ENCODE measurements at regions of chr6 and their contacts with region 1.

Region 1: DNA sequence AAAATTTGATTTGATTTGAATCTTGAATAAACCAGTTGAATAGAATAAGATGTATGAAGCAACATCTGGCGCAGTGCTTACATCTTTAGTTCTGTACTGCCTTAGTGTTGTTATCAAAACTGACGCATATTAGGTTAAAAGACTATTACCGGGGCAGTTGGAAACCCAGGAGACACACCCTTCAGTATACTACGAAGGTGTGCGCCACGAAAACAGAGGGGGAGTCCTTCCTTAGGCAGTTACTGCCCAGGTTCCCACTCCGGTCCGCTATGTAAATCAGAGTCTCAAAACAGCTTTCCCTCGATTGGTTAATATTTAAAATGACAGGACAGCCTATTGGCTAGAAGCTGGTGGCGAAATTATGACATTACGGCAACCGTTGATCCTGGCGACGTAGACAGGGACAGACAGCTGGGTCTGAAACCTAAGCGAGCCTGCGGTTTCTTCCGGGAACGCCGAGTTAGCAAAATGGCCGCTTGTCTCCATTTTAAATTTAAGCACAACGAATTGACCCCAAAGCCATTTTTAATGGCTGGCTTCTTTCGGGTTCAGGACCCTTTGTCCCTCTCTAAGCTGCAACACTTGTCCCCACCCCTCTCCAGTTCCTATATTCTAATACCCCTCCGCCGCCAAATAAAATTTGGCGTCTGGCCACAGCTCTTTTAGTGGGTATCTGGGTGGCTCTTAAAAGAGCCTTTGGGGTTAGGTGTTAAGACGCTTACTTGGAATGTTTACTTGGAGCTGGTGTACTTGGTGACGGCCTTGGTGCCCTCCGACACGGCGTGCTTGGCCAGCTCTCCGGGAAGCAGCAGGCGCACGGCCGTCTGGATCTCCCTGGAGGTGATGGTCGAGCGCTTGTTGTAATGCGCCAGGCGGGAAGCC is 35.8 kb downstream of the HFE start:
- DNase-seq: peak; percentile 93
- H3K4me3 ChIP-seq: peak overlapping the region; percentile 78
- H3K27ac ChIP-seq: peak overlapping the region; percentile 93
- H3K27me3 ChIP-seq: no peaks in the 10 kb centered on the region
- CTCF ChIP-seq: 0 out of 2 replicates have a peak, but pooled peaks have one; percentile 2

Region 2: DNA sequence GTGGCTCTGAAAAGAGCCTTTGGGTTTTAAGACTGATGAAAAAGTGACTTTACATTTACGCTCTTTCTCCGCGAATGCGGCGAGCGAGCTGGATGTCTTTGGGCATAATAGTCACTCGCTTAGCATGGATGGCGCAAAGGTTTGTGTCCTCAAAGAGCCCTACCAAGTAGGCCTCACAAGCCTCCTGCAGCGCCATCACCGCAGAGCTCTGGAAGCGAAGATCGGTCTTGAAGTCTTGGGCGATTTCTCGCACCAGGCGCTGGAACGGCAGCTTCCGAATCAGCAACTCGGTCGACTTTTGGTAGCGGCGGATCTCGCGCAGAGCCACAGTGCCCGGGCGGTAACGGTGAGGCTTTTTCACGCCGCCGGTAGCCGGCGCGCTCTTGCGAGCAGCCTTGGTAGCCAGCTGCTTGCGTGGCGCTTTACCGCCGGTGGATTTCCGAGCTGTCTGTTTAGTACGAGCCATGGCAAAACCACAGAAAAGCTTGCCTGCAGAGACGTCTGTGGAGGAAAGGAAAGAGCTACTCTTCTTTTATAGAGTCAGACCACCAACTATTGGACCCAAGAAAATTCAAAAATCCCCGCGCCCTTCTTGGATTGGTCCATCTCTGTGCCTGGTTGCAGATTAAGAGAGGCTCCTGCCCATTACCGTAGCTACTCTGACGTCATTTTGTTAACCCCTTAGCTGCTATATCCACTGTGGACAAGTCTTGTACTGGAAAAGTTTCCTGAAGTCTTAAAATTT is 91.3 kb before region 1 on chr6:
- CTCF ChIA-PET with region 1: interaction called, 6 read pairs
- POLR2A ChIA-PET with region 1: interaction called, 27 read pairs
- DNase-seq: peak; percentile 87
- H3K4me3 ChIP-seq: peak overlapping the region; percentile 68
- H3K27ac ChIP-seq: peak overlapping the region; percentile 92
- H3K27me3 ChIP-seq: no peaks in the 10 kb centered on the region
- CTCF ChIP-seq: peak; percentile 33

Region 3: DNA sequence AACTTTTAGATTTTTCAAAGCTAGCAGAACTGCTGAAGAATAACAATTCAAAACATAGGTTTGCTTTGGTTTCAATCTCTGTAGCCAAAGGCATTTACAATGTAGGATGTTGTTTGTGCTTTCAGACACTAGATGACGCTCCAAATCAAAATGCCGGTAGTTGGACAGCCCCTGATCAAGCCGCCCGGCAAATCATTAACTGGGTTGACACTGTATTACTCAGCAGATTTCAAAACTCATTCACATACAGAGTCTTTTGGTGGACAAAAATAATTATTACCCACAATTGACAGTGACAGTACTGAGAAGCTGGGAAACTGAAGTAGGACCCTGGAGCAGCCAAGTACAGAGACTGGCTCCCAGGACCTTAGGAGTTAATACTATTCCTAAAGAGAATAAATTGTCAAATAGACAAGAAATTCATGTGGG is 57.1 kb before region 1 on chr6:
- CTCF ChIA-PET with region 1: interaction called, 13 read pairs
- POLR2A ChIA-PET with region 1: interaction called, 4 read pairs
- DNase-seq: peak; percentile 62
- H3K4me3 ChIP-seq: no peak overlapping the region
- H3K27ac ChIP-seq: no peak overlapping the region
- H3K27me3 ChIP-seq: no peaks in the 10 kb centered on the region
- CTCF ChIP-seq: peak; percentile 91

Region 4: DNA sequence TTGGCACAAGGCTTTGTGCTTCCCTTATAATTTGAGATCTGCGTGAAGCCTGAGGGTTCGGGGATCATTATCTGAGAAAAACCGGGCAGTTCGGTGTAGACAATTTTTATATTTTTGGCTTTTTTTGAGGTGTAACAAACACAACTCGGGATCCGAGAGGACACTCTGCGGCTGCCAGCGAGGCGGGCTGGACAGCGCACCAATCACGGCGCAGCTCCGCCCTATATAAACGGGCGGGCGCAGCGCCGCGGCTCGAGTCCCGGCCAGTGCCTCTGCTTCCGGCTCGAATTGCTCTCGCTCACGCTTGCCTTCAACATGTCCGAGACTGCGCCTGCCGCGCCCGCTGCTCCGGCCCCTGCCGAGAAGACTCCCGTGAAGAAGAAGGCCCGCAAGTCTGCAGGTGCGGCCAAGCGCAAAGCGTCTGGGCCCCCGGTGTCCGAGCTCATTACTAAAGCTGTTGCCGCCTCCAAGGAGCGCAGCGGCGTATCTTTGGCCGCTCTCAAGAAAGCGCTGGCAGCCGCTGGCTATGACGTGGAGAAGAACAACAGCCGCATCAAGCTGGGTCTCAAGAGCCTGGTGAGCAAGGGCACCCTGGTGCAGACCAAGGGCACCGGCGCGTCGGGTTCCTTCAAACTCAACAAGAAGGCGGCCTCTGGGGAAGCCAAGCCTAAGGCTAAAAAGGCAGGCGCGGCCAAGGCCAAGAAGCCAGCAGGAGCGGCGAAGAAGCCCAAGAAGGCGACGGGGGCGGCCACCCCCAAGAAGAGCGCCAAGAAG is 33.2 kb after region 1 on chr6:
- CTCF ChIA-PET with region 1: interaction called, 3 read pairs
- POLR2A ChIA-PET with region 1: interaction called, 545 read pairs
- DNase-seq: peak; percentile 74
- H3K4me3 ChIP-seq: peak overlapping the region; percentile 83
- H3K27ac ChIP-seq: peak overlapping the region; percentile 97
- H3K27me3 ChIP-seq: no peaks in the 10 kb centered on the region
- CTCF ChIP-seq: peak; percentile 1; the same call in 1 of the 2 replicates

Region 5: DNA sequence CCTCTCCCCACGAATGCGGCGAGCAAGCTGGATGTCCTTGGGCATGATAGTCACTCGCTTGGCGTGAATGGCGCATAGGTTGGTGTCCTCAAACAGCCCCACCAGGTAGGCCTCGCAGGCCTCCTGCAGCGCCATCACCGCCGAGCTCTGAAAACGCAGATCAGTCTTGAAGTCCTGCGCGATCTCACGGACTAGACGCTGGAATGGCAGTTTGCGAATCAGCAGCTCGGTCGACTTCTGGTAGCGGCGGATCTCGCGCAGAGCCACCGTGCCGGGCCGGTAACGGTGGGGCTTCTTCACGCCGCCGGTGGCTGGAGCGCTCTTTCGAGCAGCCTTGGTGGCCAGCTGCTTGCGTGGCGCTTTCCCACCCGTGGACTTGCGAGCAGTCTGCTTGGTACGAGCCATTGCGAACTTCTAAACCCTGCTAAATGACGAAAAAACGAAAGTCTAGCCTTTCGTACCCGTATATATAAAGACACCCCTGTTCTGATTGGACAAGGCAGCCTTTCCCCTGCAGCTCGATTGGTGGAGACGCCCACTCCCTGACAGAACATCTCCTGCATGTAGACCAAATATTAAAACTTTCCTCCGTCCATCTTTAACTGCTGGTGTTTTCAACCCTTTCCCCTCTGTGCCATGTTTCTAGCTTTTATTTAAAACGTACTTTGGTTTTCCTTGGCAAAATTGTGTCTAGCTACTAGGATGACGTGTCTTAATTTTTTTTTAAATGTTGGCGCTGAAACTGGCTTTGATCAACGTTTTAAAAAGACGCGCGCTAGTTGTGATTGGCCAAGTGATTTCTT is 74.0 kb after region 1 on chr6:
- CTCF ChIA-PET with region 1: no interaction called
- POLR2A ChIA-PET with region 1: interaction called, 112 read pairs
- DNase-seq: peak; percentile 86
- H3K4me3 ChIP-seq: peak overlapping the region; percentile 88
- H3K27ac ChIP-seq: peak overlapping the region; percentile 91
- H3K27me3 ChIP-seq: no peaks in the 10 kb centered on the region
- CTCF ChIP-seq: no peak

Region 6: DNA sequence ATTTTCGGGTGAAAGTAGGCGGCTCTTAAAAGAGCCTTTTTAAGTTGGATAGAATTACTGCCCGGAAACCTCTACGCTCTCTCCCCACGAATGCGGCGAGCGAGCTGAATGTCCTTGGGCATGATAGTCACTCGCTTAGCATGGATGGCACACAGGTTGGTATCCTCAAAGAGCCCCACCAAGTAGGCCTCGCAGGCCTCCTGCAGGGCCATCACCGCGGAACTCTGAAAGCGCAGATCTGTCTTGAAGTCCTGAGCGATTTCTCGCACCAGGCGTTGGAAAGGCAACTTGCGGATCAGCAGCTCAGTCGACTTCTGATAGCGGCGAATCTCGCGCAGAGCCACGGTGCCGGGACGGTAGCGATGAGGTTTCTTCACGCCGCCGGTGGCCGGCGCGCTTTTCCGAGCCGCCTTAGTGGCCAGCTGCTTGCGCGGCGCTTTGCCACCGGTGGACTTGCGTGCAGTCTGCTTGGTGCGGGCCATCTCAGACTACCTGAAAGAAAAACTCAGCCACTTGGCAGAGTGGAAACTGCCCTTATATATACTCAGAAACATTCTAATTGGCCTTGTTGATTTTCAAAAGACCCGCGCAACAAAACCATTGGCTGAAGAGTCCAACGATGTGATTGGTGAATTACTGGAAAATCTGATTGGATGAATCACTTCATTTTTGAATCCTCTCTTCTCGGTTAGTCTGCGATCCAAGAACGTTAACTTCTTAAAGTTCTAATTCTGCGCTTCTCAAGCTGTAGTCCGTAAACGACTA is 148.1 kb after region 1 on chr6:
- CTCF ChIA-PET with region 1: no interaction called
- POLR2A ChIA-PET with region 1: interaction called, 11 read pairs
- DNase-seq: no peak
- H3K4me3 ChIP-seq: peak overlapping the region; percentile 65
- H3K27ac ChIP-seq: peak overlapping the region; percentile 68
- H3K27me3 ChIP-seq: no peaks in the 10 kb centered on the region
- CTCF ChIP-seq: no peak

Measured in AG04450 (cell line).